Heart right ventricle (tissue), 16 donors: ENCODE measurements at regions of chr1 and their contacts with region 1.

Region 1: DNA sequence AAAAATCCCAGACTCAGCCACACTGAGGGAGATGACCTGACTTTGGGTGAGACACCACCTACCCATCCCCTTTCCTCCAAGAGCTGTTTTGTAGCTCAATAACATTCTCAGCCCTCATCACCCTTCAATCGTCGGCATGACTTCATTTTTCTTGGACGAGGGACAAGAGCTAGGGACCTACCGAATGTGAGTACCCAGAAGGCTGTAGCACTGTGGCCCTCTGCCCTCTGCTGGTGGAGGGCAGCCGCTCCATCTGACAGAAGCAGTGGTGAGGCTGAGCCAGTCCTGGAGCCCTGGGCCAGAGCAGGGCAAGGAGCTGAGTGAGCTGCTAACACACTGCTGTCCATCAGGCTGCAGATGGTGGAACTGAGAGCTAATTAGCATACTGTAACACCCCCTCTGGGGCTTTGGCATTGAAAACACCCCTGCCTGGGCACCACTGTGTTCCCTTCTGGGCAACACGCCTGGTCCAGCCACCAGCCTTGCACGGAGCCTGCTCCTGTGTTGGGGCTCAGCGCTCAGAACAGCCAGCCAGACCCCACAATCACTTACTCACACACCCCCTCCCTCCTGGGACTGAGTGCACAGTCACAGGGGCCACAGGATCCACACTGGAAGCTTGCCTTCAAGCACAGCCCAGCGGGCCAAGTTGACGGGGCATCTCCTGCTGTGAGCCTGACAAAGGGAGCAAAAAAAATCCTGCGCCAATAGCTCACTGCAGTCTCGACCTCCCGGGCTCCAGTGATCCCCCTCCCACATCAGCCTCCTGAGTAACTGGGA is 18.3 kb upstream of the ALPL start:
- DNase-seq: no peak
- ATAC-seq: peak in 6 of 8 donors; percentile 44 to 68 (median 53)
- H3K4me3 ChIP-seq: no peak overlapping the region
- H3K27ac ChIP-seq: peak overlapping the region in 1 of 10 donors; percentile 39
- H3K4me1 ChIP-seq: peaks cover 0 to 34% (median 11%) of the 10 kb centered on the region in 9 donors
- H3K27me3 ChIP-seq: peaks cover 0 to 20% (median 7%) of the 10 kb centered on the region in 7 donors
- CTCF ChIP-seq: peak in 8 of 9 donors; percentile 9 to 56 (median 26)

Region 2: DNA sequence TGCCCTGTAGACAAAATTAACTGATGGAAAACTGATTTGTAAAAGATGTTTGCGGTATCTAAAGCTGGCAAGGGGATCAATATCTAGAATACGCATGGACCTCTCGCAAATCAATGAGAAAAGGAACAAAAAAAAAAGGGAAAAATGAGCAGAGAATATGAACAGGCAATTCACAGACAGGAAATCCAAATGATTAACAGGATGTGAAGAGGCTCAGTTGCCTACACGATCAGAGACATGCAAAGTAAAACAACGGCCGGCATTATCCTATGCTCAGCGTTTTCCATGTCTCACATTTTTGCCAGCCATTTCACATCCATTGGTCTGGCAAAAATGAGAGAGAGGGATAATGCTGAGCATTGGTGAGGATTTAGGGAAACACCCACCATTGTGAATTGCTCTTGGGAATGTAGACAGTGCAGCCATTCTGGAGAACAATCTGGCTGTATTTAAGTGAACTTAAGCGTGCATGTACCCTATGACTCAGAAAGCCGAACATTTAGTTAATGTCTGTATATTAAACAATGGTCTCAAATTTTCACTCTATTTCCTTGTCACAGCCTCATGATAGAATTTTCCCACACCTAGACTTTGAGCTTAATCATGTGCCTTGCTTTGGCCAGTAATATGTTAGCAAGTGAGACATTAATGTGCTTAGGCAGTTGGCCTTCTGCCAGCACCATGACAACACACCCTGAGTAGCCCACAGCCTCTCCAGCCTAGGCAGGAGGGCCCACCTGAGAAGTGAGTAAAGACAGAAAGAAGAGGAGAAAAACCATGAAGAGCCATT is 112.1 kb before region 1 on chr1:
- intact Hi-C with region 1: loop called in 1 of 10 experiments (anchors 10 kb)
- DNase-seq: no peak
- ATAC-seq: no peak
- H3K4me3 ChIP-seq: no peak overlapping the region
- H3K27ac ChIP-seq: no peak overlapping the region
- H3K4me1 ChIP-seq: no peaks in the 10 kb centered on the region
- H3K27me3 ChIP-seq: peaks cover 0 to 56% (median 11%) of the 10 kb centered on the region in 7 donors
- CTCF ChIP-seq: no peak

Region 3: GRCh38 chr1:21963477-21964217 is 472.7 kb after region 1 on chr1:
- intact Hi-C with region 1: no loop called
- DNase-seq: peak; percentile 73 to 79
- ATAC-seq: peak; percentile 86 to 94 (median 90)
- H3K4me3 ChIP-seq: no peak overlapping the region
- H3K27ac ChIP-seq: no peak overlapping the region
- H3K4me1 ChIP-seq: peaks cover 0 to 30% (median 9%) of the 10 kb centered on the region in 9 donors
- H3K27me3 ChIP-seq: no peaks in the 10 kb centered on the region
- CTCF ChIP-seq: peak; percentile 76 to 97 (median 95)